Endothelial cell of umbilical vein (primary cell): ENCODE measurements at regions of chr10 and their contacts with region 1.

Region 1: DNA sequence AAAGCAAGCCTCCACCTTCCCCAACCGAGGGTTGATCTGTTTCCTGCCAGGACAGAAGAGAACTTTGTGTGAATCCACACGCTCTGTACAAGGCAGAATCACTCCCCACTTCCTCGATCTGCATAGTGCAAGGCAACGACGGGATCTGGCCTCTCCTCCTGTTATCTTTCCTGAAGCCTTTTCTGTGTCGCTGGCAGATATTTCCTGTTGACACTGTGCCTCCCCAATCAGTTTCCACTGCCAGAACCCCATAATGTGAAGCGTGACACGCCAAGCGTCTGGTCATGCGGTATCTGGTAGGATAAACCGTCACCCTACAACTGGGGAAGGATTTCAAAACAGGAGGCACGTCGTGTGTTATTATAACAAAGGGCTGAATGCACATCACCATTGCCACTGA is 57.2 kb downstream of the FAM171A1 start:
- DNase-seq: peak; percentile 84
- H3K4me3 ChIP-seq: peak overlapping the region in 1 of 3 experiments; percentile 32
- H3K27ac ChIP-seq: peak overlapping the region; percentile 42
- H3K4me1 ChIP-seq: peaks cover 34% of the 10 kb centered on the region
- H3K27me3 ChIP-seq: no peaks in the 10 kb centered on the region
- CTCF ChIP-seq: no peak
- POLR2A ChIP-seq: peak; percentile 37

Region 2: DNA sequence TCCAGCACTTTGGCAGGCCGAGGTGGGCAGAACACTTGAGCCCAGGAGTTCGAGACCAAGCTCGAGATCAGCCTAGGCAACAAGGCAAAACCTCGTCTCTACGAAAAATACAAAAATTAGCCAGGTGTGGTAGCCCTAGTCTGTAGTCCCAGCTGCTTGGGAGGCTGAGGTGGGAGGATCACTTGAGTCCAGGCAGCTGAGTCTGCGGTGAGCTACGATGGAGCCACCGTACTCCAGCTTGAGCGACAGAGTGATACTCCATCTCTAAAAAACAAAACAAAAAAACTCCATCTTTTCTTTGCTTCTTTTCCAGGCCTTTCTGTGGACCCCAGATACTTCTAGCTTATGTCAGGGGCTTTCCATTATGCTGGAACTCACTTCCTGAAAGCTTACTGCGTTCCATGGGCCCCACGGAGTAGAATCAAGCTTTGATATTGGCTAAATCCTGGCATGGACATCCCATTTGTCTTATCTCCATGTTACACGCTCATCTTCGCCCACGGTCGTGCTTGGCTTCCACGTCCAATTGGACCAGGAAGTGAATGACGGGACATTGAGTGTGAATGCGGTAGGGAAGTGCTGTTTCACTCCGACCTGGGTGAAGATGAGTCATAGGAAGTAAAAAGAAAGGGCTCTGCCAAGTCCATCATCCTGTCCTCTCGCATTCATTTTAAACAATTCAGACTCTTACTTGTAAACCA is 11.6 kb after region 1 on chr10:
- CTCF ChIA-PET with region 1: interaction called, 6 read pairs
- POLR2A ChIA-PET with region 1: no interaction called
- dilution Hi-C with region 1: no loop called
- intact Hi-C with region 1: loop called (anchors 1 kb)
- DNase-seq: peak; percentile 84
- H3K4me3 ChIP-seq: peak overlapping the region in 1 of 3 experiments; percentile 8
- H3K27ac ChIP-seq: peak overlapping the region; percentile 46
- H3K4me1 ChIP-seq: peaks cover 27% of the 10 kb centered on the region
- H3K27me3 ChIP-seq: no peaks in the 10 kb centered on the region
- CTCF ChIP-seq: no peak
- POLR2A ChIP-seq: peak; percentile 21

Region 3: GRCh38 chr10:15333909-15334649 is 20.2 kb after region 1 on chr10:
- CTCF ChIA-PET with region 1: interaction called, 3 read pairs
- POLR2A ChIA-PET with region 1: interaction called, 12 read pairs
- dilution Hi-C with region 1: no loop called
- intact Hi-C with region 1: no loop called
- DNase-seq: no peak
- H3K4me3 ChIP-seq: no peak overlapping the region
- H3K27ac ChIP-seq: no peak overlapping the region
- H3K4me1 ChIP-seq: no peaks in the 10 kb centered on the region
- H3K27me3 ChIP-seq: no peaks in the 10 kb centered on the region
- CTCF ChIP-seq: no peak
- POLR2A ChIP-seq: no peak

Region 4: DNA sequence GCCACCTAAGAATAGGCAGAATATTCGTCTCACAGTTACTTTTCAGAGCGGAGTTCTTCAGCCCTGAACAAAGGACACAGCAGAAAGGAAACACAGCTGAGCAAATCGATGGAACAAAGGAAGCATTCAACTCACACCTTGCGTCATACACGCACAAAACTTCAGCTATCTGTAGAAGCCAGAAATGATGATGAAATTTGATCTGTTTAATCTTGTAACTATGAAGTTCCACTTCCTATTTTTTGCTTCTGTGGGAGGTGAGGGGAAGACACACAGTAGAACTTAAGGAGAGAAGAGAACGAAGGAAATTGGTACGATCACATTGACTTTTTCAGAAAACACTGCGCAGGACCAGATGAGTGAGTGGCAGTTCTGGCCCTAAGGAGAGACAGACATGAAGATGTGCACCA is 31.0 kb after region 1 on chr10:
- CTCF ChIA-PET with region 1: no interaction called
- POLR2A ChIA-PET with region 1: no interaction called
- dilution Hi-C with region 1: no loop called
- intact Hi-C with region 1: no loop called
- DNase-seq: peak; percentile 86
- H3K4me3 ChIP-seq: no peak overlapping the region
- H3K27ac ChIP-seq: peak overlapping the region; percentile 65
- H3K4me1 ChIP-seq: peaks cover 33% of the 10 kb centered on the region
- H3K27me3 ChIP-seq: no peaks in the 10 kb centered on the region
- CTCF ChIP-seq: no peak
- POLR2A ChIP-seq: no peak

Region 5: DNA sequence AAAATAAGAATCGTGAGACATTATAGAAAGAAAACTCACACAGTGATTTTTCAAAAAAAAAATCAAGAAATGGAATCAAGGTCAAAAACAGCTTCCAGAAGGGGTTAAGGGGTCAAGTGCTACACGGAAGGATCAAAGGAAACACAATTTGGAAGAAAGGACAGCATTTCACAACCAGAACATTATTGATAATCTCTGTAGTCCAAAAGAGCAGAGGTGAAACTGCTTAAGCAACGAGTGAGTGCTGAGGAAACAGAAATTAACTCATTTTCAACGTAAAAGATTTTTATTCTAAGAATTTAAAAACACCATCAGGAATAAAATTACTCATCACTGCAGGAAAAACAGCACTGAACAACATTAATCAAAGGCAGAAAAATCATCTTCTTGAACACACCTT is 523.0 kb after region 1 on chr10:
- CTCF ChIA-PET with region 1: no interaction called
- POLR2A ChIA-PET with region 1: no interaction called
- dilution Hi-C with region 1: no loop called
- intact Hi-C with region 1: no loop called
- DNase-seq: no peak
- H3K4me3 ChIP-seq: no peak overlapping the region
- H3K27ac ChIP-seq: no peak overlapping the region
- H3K4me1 ChIP-seq: no peaks in the 10 kb centered on the region
- H3K27me3 ChIP-seq: no peaks in the 10 kb centered on the region
- CTCF ChIP-seq: no peak
- POLR2A ChIP-seq: no peak

Region 6: GRCh38 chr10:17238445-17239291 is 1924.8 kb after region 1 on chr10:
- CTCF ChIA-PET with region 1: no interaction called
- POLR2A ChIA-PET with region 1: no interaction called
- dilution Hi-C with region 1: no loop called
- intact Hi-C with region 1: no loop called
- DNase-seq: peak; percentile 81
- H3K4me3 ChIP-seq: no peak overlapping the region
- H3K27ac ChIP-seq: peak overlapping the region; percentile 40
- H3K4me1 ChIP-seq: peaks cover 20% of the 10 kb centered on the region
- H3K27me3 ChIP-seq: no peaks in the 10 kb centered on the region
- CTCF ChIP-seq: no peak
- POLR2A ChIP-seq: peak; percentile 92